ENCODE measurements at regions of chr5 and their contacts with region 1.

Region 1: GRCh38 chr5:87210743-87211430 is 56.8 kb upstream of the RASA1 start:
- DNase-seq: no peak
- H3K4me3 ChIP-seq: no peak overlapping the region
- H3K27ac ChIP-seq: no peak overlapping the region
- H3K4me1 ChIP-seq: no peaks in the 10 kb centered on the region
- H3K27me3 ChIP-seq: no peaks in the 10 kb centered on the region
- CTCF ChIP-seq: no peak
- EP300 ChIP-seq: no peak
- POLR2A ChIP-seq: no peak

Region 2: DNA sequence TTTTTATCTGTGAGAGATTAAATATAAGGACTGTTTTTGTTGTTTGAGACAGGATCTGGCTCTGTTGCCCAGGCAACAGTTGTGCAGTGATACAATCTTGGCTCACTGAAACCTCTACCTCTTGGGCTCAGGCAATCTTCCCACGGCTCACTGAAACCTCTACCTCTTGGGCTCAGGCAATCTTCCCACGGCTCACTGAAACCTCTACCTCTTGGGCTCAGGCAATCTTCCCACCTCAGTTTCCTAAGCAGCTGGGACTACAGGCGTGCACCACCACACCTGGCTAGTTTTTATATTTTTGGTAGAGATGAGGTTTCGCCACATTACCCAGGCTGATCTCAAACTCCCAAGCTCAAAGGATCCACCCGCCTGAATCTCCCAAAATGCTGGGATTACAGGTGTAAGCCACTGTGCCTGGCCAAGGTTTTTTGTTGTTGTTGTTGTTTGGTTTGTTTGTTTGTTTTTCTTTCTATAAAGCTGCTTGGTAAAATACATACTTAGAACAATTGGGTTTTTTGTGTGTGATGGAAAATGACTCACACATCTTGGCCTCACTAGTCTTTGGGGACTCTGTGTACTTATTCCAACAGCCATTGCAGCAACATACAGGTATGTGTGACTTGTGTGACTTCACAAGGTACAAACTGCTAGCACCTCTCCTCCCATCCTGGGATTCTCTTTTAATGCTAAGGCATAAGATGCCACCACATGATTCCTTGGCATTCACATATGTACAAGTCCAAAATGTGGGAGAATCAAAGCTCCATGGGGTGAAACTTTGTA is 20.3 kb after region 1 on chr5:
- intact Hi-C with region 1: loop called in 1 of 4 experiments (anchors 1 kb)
- DNase-seq: no peak
- H3K4me3 ChIP-seq: no peak overlapping the region
- H3K27ac ChIP-seq: no peak overlapping the region
- H3K4me1 ChIP-seq: no peaks in the 10 kb centered on the region
- H3K27me3 ChIP-seq: no peaks in the 10 kb centered on the region
- CTCF ChIP-seq: no peak
- EP300 ChIP-seq: no peak
- POLR2A ChIP-seq: no peak

Region 3: DNA sequence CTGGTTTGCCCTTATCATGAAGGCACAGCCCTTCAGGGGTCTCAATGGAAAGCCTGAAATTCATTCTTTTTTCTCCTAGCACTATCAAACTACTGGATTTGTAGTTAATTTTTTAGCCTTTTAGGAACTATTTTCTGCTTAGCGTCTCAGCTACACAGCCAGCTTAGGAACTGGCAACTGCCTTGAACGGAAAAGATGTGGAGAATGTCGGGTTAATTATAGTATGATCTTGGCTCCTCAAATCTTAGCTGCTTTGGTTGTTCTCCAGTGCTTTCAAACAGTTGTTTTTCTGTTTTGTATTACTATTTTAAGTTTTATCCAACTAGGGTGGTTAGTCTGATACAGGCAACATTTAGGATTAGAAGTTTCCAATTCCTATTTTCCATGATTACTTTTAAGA is 157.7 kb after region 1 on chr5:
- intact Hi-C with region 1: no loop called
- DNase-seq: no peak
- H3K4me3 ChIP-seq: no peak overlapping the region
- H3K27ac ChIP-seq: no peak overlapping the region
- H3K4me1 ChIP-seq: no peaks in the 10 kb centered on the region
- H3K27me3 ChIP-seq: no peaks in the 10 kb centered on the region
- CTCF ChIP-seq: no peak
- EP300 ChIP-seq: no peak
- POLR2A ChIP-seq: no peak